Activated CD4-positive, alpha-beta T cell treated with anti-CD3 and anti-CD28 coated beads for 36 hours (primary cell): ENCODE measurements at regions of chr5 and their contacts with region 1.

Region 1: GRCh38 chr5:176609724-176610434 is at the start of gene GPRIN1:
- DNase-seq: peak; percentile 77
- ATAC-seq: peak; percentile 83
- H3K4me3 Mint-ChIP-seq: peak within 1 kb of the TSS; percentile 79
- H3K27ac Mint-ChIP-seq: no peak within 1 kb of the TSS
- H3K4me1 Mint-ChIP-seq: peaks cover 10% of the 10 kb centered on the region
- H3K27me3 Mint-ChIP-seq: peaks cover 28% of the 10 kb centered on the region
- total RNA-seq, gene GPRIN1: 3.8 to 4.1 TPM

Region 2: GRCh38 chr5:175796536-175797499 is 813.1 kb before region 1 on chr5:
- CTCF ChIA-PET with region 1: no interaction called
- POLR2A ChIA-PET with region 1: no interaction called
- intact Hi-C with region 1: loop called in 1 of 2 experiments (anchors 2 kb)
- DNase-seq: peak; percentile 90
- ATAC-seq: peak; percentile 99
- H3K4me3 Mint-ChIP-seq: no peak overlapping the region
- H3K27ac Mint-ChIP-seq: no peak overlapping the region
- H3K4me1 Mint-ChIP-seq: peaks cover 4% of the 10 kb centered on the region
- H3K27me3 Mint-ChIP-seq: peaks cover 67% of the 10 kb centered on the region

Region 3: DNA sequence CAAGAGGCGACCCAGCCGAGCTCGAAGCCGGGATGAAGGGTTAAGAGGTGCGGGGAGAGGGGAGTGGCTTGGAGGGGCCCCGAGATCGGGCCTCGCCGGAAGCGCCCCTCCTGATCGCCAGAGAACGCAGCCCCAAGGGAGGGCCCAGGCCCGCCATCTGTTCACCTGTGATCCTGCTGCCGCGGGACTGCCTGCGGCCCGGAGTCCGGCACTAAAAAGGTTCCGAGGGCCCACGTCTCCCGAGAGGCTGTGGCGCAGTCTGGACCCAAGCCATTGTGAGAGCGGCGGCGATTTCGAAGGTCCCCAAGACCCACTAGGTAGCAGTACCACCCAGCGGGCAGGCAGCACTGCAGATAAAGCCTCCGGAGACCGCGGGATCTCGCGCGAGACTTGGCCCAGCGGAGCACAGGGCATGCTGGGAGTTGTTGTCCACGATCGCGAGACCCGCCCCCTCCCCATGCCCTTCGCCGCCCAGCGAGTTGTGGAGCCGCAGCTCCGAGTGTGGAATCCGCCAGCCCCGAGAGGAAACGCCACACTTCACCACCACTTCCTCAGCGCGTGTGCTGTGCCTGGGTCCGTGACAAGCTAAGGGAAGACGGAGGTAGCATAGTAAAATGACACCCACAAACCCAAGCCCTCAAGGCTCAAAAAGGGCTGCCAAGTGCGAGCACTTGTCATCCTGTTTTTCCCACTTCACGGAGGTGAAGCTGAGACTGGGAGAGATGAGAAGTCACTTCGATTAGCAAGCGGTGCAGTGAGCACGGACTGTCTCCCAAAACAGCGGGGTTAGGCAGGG is 248.2 kb before region 1 on chr5 and contains the start of gene KIAA1191:
- CTCF ChIA-PET with region 1: no interaction called
- POLR2A ChIA-PET with region 1: no interaction called
- intact Hi-C with region 1: loop called in 1 of 2 experiments (anchors 1 kb)
- DNase-seq: peak; percentile 97
- ATAC-seq: peak; percentile 91
- H3K4me3 Mint-ChIP-seq: peak within 1 kb of the TSS; percentile 95
- H3K27ac Mint-ChIP-seq: peak within 1 kb of the TSS; percentile 94
- H3K4me1 Mint-ChIP-seq: peaks cover 32% of the 10 kb centered on the region
- H3K27me3 Mint-ChIP-seq: no peaks in the 10 kb centered on the region
- total RNA-seq, gene KIAA1191: 42.2 to 52.6 TPM

Region 4: GRCh38 chr5:176388444-176389134 is 221.3 kb before region 1 on chr5 and contains the starts of genes HIGD2A and NOP16:
- CTCF ChIA-PET with region 1: no interaction called
- POLR2A ChIA-PET with region 1: no interaction called
- intact Hi-C with region 1: loop called in 1 of 2 experiments (anchors 1 kb)
- DNase-seq: peak; percentile 100
- ATAC-seq: peak; percentile 93
- H3K4me3 Mint-ChIP-seq: peak within 1 kb of the TSS; percentile 95
- H3K27ac Mint-ChIP-seq: peak within 1 kb of the TSS; percentile 100
- H3K4me1 Mint-ChIP-seq: peaks cover 31% of the 10 kb centered on the region
- H3K27me3 Mint-ChIP-seq: no peaks in the 10 kb centered on the region
- total RNA-seq, gene HIGD2A: 104 to 140 TPM
- total RNA-seq, gene NOP16: 54.3 to 65.4 TPM

Region 5: DNA sequence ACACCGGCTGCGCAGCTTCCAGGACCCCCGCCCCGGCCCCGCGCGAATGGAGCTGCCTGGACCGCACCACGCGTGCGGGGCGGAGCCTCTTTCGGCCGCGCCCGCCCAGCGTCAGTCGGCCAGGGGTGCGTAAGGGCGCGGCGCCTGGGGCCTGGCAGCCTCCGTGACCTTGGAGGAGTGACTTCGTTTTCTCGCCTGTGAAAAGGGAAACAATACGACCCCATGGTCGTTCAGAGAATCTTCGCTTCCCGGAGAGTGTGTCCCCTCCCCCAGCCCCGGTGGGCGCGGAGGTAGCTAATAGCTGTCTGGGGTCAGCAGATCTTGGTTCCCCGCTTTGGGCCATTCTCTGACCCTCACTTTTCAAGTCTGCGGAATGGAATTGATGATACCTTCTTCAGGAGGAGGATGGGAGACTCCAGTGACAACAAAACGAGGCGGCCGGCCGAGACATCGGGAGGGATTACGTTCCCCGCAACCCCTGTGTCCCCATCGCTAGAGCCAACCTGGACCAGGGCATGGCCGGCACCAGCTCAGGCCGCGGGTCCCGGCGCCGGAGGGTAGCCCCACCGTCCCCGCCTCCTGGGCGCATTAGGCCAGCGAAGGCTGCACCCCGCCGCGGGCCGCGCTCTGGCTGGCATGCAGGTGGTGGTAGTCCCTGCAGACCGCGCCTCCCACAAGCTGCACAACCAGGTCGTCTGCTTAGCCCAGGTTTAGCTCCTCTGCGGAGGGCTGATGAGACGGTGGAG is 66.3 kb before region 1 on chr5:
- CTCF ChIA-PET with region 1: no interaction called
- POLR2A ChIA-PET with region 1: no interaction called
- intact Hi-C with region 1: loop called in 1 of 2 experiments (anchors 2 kb)
- DNase-seq: peak; percentile 87
- ATAC-seq: peak; percentile 75
- H3K4me3 Mint-ChIP-seq: peak overlapping the region; percentile 85
- H3K27ac Mint-ChIP-seq: peak overlapping the region; percentile 93
- H3K4me1 Mint-ChIP-seq: peaks cover 61% of the 10 kb centered on the region
- H3K27me3 Mint-ChIP-seq: no peaks in the 10 kb centered on the region

Region 6: GRCh38 chr5:176596689-176597416 is 13.0 kb before region 1 on chr5:
- CTCF ChIA-PET with region 1: interaction called, 3 read pairs
- POLR2A ChIA-PET with region 1: interaction called, 4 read pairs
- intact Hi-C with region 1: loop called in 1 of 2 experiments (anchors 1 kb)
- DNase-seq: peak; percentile 81
- ATAC-seq: peak; percentile 87
- H3K4me3 Mint-ChIP-seq: peak overlapping the region; percentile 48
- H3K27ac Mint-ChIP-seq: peak overlapping the region; percentile 68
- H3K4me1 Mint-ChIP-seq: peaks cover 8% of the 10 kb centered on the region
- H3K27me3 Mint-ChIP-seq: peaks cover 2% of the 10 kb centered on the region